A549 (cell line): ENCODE measurements at regions of chr20 and their contacts with region 1.

Region 1: DNA sequence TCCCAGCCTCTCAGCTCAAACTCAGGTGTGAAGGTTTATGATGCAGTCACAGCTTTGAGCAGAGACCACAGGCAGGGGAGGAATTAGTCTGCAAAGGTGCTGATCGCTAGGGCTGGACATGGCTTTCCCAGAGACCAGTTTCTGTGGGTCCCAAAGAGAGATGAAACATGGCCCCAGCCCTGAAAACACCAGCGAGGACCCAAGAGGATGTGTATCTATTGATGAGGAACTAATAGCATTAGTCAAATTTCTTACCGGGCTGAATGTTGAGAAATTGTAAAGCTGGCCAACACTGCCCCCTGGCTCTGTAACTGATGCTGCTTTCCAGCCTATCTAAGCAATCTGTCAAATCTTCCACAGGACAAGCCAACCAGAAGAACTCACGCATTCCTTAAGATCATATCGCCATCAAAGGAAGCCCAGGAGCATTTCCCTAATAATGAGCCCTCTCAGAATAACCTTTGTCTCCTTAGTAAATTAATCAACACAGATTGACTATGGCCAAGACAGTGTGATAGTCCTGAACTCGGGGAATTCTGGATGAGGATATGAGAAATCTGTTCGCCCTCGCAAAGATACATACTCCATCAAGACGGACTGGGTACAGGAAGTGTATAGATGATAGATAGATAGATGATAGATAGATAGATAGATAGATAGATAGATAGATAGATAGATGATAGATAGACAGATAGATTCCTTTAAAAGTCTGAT is 7.8 kb upstream of the ACSS1 start:
- DNase-seq: peak; percentile 71 to 76
- ATAC-seq: peak; percentile 84 to 90
- H3K4me3 ChIP-seq: no peak overlapping the region
- H3K27ac ChIP-seq: no peak overlapping the region
- H3K4me1 ChIP-seq: peaks cover 13% of the 10 kb centered on the region; the same call in 2 of the 3 replicates
- CTCF ChIP-seq: peak; percentile 82
- EP300 ChIP-seq: no peak
- POLR2A ChIP-seq: no peak
- RAD21 ChIP-seq: peak; percentile 88 to 90

Region 2: DNA sequence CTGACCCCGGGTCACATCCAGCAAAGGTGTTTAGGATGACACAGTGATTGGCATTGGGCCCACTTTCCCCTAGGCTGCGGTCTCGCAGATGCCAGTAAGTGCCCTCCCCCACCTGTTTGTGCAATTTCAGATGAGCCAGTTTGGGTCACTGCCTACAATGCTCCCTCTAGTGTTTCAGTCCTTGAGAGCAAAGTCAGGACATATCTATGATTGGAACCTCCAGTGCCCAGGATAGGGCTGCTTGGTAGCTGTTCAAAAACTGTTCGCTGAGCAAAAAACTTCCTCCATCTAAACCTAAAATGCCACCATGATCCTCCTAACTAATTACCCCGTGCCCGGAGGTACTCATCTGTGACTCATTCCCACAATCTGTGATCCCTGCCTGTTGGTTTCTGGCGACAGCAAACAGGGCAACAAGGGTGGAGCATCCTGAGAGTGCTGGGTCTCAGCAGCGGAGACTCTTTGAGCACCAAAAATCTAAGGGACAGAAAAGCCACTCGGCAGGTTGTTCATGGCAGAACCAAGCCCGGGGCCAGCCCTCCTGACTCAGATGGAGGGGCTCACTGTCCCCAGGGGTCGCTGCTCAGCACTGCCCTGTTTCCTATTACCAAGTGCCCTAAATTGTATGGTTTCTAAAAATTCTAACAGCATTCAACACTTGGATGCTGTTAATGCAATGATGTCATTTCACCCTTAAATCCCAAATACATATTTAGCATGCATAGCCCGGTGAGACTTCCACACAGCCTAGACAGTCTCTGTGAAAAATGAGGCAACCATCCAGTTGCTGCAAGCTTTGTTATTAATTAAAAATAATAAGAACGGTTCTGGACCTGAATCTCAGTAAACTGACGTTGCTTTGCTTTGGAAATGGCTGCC is 11.2 kb after region 1 on chr20:
- CTCF ChIA-PET with region 1: interaction called, 69 read pairs
- POLR2A ChIA-PET with region 1: no interaction called
- DNase-seq: peak; percentile 80 to 89
- ATAC-seq: peak; percentile 72 to 80
- H3K4me3 ChIP-seq: peak overlapping the region; percentile 40
- H3K27ac ChIP-seq: peak overlapping the region; percentile 71 to 80
- H3K4me1 ChIP-seq: peaks cover 40% of the 10 kb centered on the region
- CTCF ChIP-seq: peak; percentile 60
- EP300 ChIP-seq: peak in 1 of 2 experiments; percentile 17; a peak in 1 of 5 replicates
- POLR2A ChIP-seq: no peak
- RAD21 ChIP-seq: peak; percentile 44 to 53; a peak in 3 of 5 replicates

Region 3: GRCh38 chr20:25083773-25084625 is 18.2 kb after region 1 on chr20:
- CTCF ChIA-PET with region 1: interaction called, 69 read pairs
- POLR2A ChIA-PET with region 1: no interaction called
- DNase-seq: no peak
- ATAC-seq: peak; percentile 36 to 58; a peak in 3 of 6 replicates
- H3K4me3 ChIP-seq: peak overlapping the region; percentile 43
- H3K27ac ChIP-seq: peak overlapping the region; percentile 13 to 37; a peak in 3 of 6 replicates
- H3K4me1 ChIP-seq: peaks cover 14% of the 10 kb centered on the region
- CTCF ChIP-seq: no peak
- EP300 ChIP-seq: no peak
- POLR2A ChIP-seq: no peak
- RAD21 ChIP-seq: no peak